Esophagus muscularis mucosa (tissue), 4 donors: ENCODE measurements at regions of chr5 and their contacts with region 1.

Region 1: GRCh38 chr5:138035605-138036537 is 3.0 kb upstream of the FAM13B start:
- DNase-seq: no peak
- H3K4me3 ChIP-seq: no peak overlapping the region
- H3K27ac ChIP-seq: peak overlapping the region; percentile 57 to 63 (median 62)
- H3K4me1 ChIP-seq: peaks cover 12 to 34% (median 26%) of the 10 kb centered on the region in 4 donors
- H3K27me3 ChIP-seq: no peaks in the 10 kb centered on the region
- CTCF ChIP-seq: peak; percentile 79 to 84 (median 81)
- EP300 ChIP-seq: no peak
- POLR2A ChIP-seq: no peak

Region 2: DNA sequence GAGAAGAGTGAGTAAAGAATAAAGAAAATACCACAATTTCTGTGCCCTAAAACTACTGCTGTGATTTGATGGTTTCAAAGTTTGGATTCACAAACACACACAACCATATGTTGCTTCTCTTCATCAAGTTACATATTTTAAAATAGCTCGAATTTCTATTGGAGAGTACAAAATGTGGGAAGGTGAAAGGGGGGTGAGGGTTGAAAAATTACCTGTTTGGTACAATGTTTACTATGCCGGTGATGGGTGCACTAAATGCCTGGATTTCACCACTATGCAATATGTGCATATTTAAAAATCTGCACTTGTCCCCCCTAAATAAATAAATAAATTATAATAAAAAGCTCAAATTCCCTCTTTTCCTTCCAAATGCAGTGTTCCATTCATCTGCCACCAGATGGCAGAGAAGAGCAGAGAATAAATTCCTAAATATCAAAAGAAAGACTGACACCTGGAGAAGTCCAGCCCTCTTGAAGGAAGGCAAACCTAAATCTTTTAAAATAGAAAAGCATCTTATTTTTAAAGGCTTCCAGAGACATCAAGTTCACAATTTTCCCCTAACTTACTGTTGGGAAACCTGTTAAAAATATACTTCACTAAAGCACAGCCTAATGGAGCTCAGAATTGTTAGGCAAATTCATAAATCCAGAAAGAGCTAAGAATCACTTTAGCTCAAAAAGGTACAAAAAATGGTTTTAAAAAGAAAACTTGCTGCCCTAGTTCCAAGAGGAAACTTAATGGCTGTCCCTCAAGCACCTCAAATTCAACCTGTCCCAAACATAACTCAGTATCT is 256.9 kb before region 1 on chr5:
- intact Hi-C with region 1: loop called (anchors 10 kb)
- DNase-seq: no peak
- H3K4me3 ChIP-seq: no peak overlapping the region
- H3K27ac ChIP-seq: no peak overlapping the region
- H3K4me1 ChIP-seq: no peaks in the 10 kb centered on the region
- H3K27me3 ChIP-seq: no peaks in the 10 kb centered on the region
- CTCF ChIP-seq: peak; percentile 68 to 80 (median 79)
- EP300 ChIP-seq: no peak
- POLR2A ChIP-seq: no peak

Region 3: DNA sequence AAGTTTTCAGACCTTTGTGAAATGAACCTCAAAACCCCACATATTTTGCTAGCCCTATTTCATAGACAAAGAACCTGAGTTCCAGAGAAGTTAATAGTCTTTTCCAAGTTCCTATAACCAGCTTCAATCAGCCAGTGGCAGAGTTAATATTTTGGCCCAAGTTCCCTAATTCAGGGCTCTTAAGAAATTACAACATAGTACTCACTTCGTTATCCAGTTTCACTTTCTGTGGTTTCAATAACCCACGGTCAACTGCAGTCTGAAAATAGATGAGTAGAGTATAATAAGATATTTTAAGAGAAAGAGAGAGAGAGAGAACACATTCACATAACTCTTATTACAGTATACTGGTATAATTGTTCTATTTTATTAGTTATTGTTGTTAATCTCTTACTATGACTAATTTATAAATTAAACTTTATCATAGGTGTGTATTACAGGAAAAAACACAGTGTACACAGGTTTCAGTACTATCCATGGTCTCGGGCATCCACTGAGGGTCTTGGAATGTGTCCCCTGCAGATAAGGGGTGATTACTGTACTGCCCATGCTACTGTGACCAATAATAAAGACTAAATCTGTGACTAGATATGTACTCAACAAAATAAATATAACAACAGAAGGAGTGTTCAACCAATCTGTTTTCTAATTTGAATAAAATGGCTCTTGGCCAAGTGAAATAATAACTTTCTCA is 177.5 kb before region 1 on chr5:
- intact Hi-C with region 1: no loop called
- DNase-seq: no peak
- H3K4me3 ChIP-seq: peak overlapping the region; percentile 19 to 34 (median 25)
- H3K27ac ChIP-seq: peak overlapping the region in 3 of 4 donors; percentile 54 to 65 (median 58)
- H3K4me1 ChIP-seq: peaks cover 18 to 29% (median 23%) of the 10 kb centered on the region in 4 donors
- H3K27me3 ChIP-seq: no peaks in the 10 kb centered on the region
- CTCF ChIP-seq: no peak
- EP300 ChIP-seq: no peak
- POLR2A ChIP-seq: no peak

Region 4: DNA sequence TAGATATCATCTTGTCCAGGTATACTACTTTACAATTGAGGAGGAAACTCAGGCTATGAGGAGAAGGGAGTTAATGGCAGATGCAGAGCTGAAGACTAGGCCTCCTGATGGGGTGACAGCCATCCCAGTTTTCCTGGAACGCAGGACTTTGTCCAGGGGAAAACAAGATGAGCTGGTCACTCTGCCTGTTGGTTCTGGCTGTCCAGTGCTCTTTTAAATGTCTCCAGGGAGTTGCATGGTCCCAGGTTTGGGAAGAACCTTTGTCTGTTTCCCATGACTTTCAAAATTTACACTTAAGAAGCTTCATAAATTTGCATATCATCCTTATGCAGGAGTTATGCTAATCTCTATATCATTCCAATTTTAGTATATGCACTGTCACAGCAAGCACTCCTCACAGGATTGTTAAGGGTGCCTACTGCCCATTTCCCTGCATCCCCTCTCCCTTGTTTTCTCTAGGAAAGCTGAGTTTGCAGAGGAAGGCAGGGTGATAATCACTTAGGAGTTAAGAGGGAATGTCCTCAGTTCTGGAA is 33.3 kb after region 1 on chr5:
- intact Hi-C with region 1: loop called (anchors 2 kb)
- DNase-seq: no peak
- H3K4me3 ChIP-seq: no peak overlapping the region
- H3K27ac ChIP-seq: no peak overlapping the region
- H3K4me1 ChIP-seq: peaks cover 0 to 3% (median 2%) of the 10 kb centered on the region in 4 donors
- H3K27me3 ChIP-seq: no peaks in the 10 kb centered on the region
- CTCF ChIP-seq: no peak
- EP300 ChIP-seq: no peak
- POLR2A ChIP-seq: no peak

Region 5: DNA sequence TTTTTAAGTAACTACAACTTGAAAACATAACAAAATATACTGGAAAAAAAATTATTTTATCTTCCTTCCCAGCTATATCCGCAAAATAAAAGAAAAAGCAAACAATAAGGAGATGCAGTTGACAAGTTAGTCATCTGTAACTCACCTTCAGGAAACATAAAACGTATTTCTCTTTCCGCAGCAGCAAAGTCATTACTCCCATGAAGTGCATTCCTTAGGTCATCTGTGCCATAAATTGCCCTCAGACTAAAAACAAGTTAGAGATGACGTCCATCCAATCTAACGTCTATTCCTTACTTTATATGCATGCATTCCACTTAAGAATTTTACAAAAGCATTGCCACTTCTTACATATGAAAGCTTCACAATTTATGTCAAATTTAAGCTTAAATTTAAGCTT is 92.5 kb after region 1 on chr5:
- intact Hi-C with region 1: loop called (anchors 5 kb)
- DNase-seq: no peak
- H3K4me3 ChIP-seq: no peak overlapping the region
- H3K27ac ChIP-seq: no peak overlapping the region
- H3K4me1 ChIP-seq: peaks cover 0 to 4% (median 0%) of the 10 kb centered on the region in 4 donors
- H3K27me3 ChIP-seq: no peaks in the 10 kb centered on the region
- CTCF ChIP-seq: no peak
- EP300 ChIP-seq: no peak
- POLR2A ChIP-seq: no peak